A549 (cell line): ENCODE measurements at regions of chr2 and their contacts with region 1.

Region 1: GRCh38 chr2:72150157-72150865 is 2.6 kb upstream of the CYP26B1 start:
- DNase-seq: peak; percentile 83 to 92
- ATAC-seq: peak; percentile 66 to 83
- H3K4me3 ChIP-seq: peak overlapping the region; percentile 61
- H3K27ac ChIP-seq: peak overlapping the region; percentile 29 to 59; a peak in 4 of 6 replicates
- H3K4me1 ChIP-seq: peaks cover 36% of the 10 kb centered on the region
- CTCF ChIP-seq: peak; percentile 89
- EP300 ChIP-seq: no peak
- POLR2A ChIP-seq: no peak
- RAD21 ChIP-seq: peak; percentile 95 to 97

Region 2: GRCh38 chr2:71545572-71546274 is 604.6 kb before region 1 on chr2:
- CTCF ChIA-PET with region 1: interaction called, 185 read pairs
- POLR2A ChIA-PET with region 1: no interaction called
- DNase-seq: peak; percentile 78 to 80
- ATAC-seq: peak; percentile 88 to 92
- H3K4me3 ChIP-seq: peak overlapping the region; percentile 16; the same call in 1 of the 3 replicates
- H3K27ac ChIP-seq: no peak overlapping the region
- H3K4me1 ChIP-seq: peaks cover 8% of the 10 kb centered on the region
- CTCF ChIP-seq: peak; percentile 97
- EP300 ChIP-seq: no peak
- POLR2A ChIP-seq: no peak
- RAD21 ChIP-seq: peak; percentile 97 to 99

Region 3: DNA sequence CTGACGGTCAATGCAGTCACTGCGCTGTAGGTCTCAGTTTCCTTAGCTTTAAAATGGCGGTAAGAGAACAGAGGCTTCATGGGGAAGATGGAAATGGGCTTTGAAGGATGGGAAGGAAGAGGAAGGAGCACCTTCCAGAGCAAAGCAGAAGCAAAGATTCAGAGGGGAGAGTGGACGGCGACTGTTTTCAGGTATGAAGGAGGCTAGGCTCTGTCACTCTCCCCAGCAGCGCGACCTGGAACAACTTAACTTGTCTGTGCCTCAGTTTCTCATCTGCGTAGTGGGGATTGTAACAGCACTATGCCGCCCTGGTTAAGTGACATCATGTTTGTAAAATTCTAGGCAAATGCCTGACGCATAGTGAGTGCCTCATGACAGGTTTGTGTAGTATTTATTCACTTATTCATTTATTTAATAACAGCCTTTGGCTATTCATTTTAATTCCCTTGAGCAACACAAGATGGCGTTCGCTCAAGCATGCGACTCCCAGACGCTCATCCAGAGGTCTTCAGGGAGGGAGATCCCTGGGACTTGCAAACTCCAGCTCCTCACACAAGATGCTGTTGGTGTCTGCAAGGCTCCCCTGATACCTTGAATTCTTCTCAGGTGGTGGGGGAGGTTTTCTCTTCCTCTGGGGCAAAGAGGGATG is 360.6 kb before region 1 on chr2:
- CTCF ChIA-PET with region 1: interaction called, 10 read pairs
- POLR2A ChIA-PET with region 1: no interaction called
- DNase-seq: peak in 1 of 2 experiments; percentile 52
- ATAC-seq: 0 out of 6 replicates have a peak, but pooled peaks of 1 of the 2 experiments have one; percentile 10
- H3K4me3 ChIP-seq: no peak overlapping the region
- H3K27ac ChIP-seq: no peak overlapping the region
- H3K4me1 ChIP-seq: peaks cover 20% of the 10 kb centered on the region
- CTCF ChIP-seq: peak; percentile 28; the same call in 2 of the 3 replicates
- EP300 ChIP-seq: no peak
- POLR2A ChIP-seq: no peak
- RAD21 ChIP-seq: peak; percentile 10 to 40; a peak in 2 of 5 replicates

Region 4: GRCh38 chr2:71852141-71852711 is 298.1 kb before region 1 on chr2:
- CTCF ChIA-PET with region 1: no interaction called
- POLR2A ChIA-PET with region 1: no interaction called
- DNase-seq: no peak
- ATAC-seq: no peak
- H3K4me3 ChIP-seq: no peak overlapping the region
- H3K27ac ChIP-seq: no peak overlapping the region
- H3K4me1 ChIP-seq: peaks cover 5% of the 10 kb centered on the region; the same call in 1 of the 3 replicates
- CTCF ChIP-seq: no peak
- EP300 ChIP-seq: no peak
- POLR2A ChIP-seq: no peak
- RAD21 ChIP-seq: no peak

Region 5: GRCh38 chr2:71923887-71924533 is 226.3 kb before region 1 on chr2:
- CTCF ChIA-PET with region 1: interaction called, 159 read pairs
- POLR2A ChIA-PET with region 1: no interaction called
- DNase-seq: peak; percentile 77 to 83
- ATAC-seq: peak; percentile 78 to 94
- H3K4me3 ChIP-seq: no peak overlapping the region
- H3K27ac ChIP-seq: no peak overlapping the region
- H3K4me1 ChIP-seq: peaks cover 6% of the 10 kb centered on the region; the same call in 1 of the 3 replicates
- CTCF ChIP-seq: peak; percentile 93
- EP300 ChIP-seq: no peak
- POLR2A ChIP-seq: no peak
- RAD21 ChIP-seq: peak; percentile 87 to 89

Region 6: GRCh38 chr2:72115552-72116546 is 34.5 kb before region 1 on chr2:
- CTCF ChIA-PET with region 1: interaction called, 13 read pairs
- POLR2A ChIA-PET with region 1: interaction called, 4 read pairs
- DNase-seq: peak; percentile 87 to 97
- ATAC-seq: peak; percentile 91 to 92
- H3K4me3 ChIP-seq: 0 out of 3 replicates have a peak overlapping the region, but pooled peaks have one; percentile 6
- H3K27ac ChIP-seq: peak overlapping the region; percentile 66 to 88
- H3K4me1 ChIP-seq: peaks cover 33% of the 10 kb centered on the region
- CTCF ChIP-seq: peak; percentile 31; the same call in 2 of the 3 replicates
- EP300 ChIP-seq: no peak
- POLR2A ChIP-seq: no peak
- RAD21 ChIP-seq: 0 out of 5 replicates have a peak, but pooled peaks of 1 of the 2 experiments have one; percentile 20

Region 7: GRCh38 chr2:72350852-72351251 is 200.5 kb after region 1 on chr2:
- CTCF ChIA-PET with region 1: no interaction called
- POLR2A ChIA-PET with region 1: no interaction called
- DNase-seq: no peak
- ATAC-seq: no peak
- H3K4me3 ChIP-seq: no peak overlapping the region
- H3K27ac ChIP-seq: no peak overlapping the region
- H3K4me1 ChIP-seq: no peaks in the 10 kb centered on the region
- CTCF ChIP-seq: no peak
- EP300 ChIP-seq: no peak
- POLR2A ChIP-seq: no peak
- RAD21 ChIP-seq: no peak

Region 8: DNA sequence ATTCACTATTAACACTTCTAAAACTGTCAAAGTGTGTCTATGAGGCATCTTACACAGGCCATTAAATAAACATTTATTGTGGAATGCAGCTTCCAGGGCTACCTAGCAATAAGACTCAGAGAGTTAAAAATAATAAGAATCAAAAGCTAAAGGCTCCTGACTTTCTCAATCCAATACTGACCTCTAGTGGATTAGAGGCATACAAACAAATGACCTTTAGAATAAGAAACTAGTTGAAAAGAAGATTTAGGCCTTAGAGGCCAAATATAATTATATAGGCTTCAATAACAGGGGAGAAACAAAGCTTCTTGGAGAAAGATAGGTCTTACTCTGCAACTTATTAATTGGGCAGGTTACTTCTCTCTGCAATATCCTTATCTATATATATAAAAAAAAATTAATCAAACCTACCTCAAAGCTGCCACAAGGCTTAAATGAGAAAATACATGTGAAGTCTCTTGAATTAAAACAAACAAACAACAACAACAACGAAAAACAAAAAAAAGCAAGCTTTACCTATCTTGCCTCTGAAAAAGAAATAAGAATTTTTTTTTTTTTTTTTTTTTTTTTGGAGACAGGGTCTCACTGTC is 429.4 kb after region 1 on chr2:
- CTCF ChIA-PET with region 1: interaction called, 54 read pairs
- POLR2A ChIA-PET with region 1: interaction called, 5 read pairs
- DNase-seq: peak in 1 of 2 experiments; percentile 74
- ATAC-seq: peak; percentile 47 to 79; a peak in 4 of 6 replicates
- H3K4me3 ChIP-seq: no peak overlapping the region
- H3K27ac ChIP-seq: no peak overlapping the region; a peak in 1 of 6 replicates
- H3K4me1 ChIP-seq: peaks cover 23% of the 10 kb centered on the region
- CTCF ChIP-seq: peak; percentile 97
- EP300 ChIP-seq: no peak
- POLR2A ChIP-seq: no peak
- RAD21 ChIP-seq: peak; percentile 94 to 97